MCF 10A (cell line): ENCODE measurements at regions of chr6 and their contacts with region 1.

Region 1: GRCh38 chr6:72748759-72749158 is 126.9 kb downstream of the KCNQ5 start:
- DNase-seq: peak; percentile 92
- H3K4me3 Mint-ChIP-seq: no peak overlapping the region
- H3K27ac Mint-ChIP-seq: no peak overlapping the region
- H3K4me1 Mint-ChIP-seq: peaks cover 32% of the 10 kb centered on the region
- H3K27me3 Mint-ChIP-seq: no peaks in the 10 kb centered on the region
- CTCF ChIP-seq: no peak

Region 2: GRCh38 chr6:72649032-72649984 is 99.5 kb before region 1 on chr6:
- CTCF ChIA-PET with region 1: no interaction called
- POLR2A ChIA-PET with region 1: interaction called, 3 read pairs
- intact Hi-C with region 1: loop called (anchors 2 kb)
- DNase-seq: peak; percentile 90
- H3K4me3 Mint-ChIP-seq: no peak overlapping the region
- H3K27ac Mint-ChIP-seq: peak overlapping the region; percentile 1
- H3K4me1 Mint-ChIP-seq: peaks cover 46% of the 10 kb centered on the region
- H3K27me3 Mint-ChIP-seq: no peaks in the 10 kb centered on the region
- CTCF ChIP-seq: no peak

Region 3: DNA sequence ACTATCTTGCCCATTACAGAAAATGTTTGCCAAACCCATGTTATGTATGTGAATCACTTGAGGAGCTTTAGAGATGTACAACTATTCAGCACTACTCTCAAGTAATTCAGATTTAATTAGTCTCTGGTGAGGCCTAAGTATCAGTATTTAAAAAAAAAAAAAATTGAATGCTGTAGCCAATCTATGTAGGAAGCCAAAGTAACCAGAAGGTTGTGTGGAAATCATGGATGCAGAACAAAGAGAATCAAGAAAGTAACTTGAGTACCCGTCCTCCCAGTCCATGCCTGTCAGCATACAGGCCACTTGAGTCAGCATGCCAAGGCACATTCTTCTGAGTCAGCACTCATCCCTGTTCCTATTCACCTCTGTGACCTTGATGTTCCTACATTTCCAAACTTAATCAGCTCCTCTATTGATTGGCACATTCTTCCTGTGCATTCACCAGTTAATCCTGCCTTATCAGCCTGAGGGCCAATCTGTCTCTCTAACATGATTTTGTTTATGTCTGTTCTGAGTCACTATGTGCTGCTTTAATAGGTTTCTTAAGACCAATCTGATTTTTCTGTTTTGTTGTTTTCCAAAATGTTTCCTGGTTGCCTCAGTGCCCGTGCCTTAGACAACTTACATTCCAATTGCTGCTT is 38.8 kb after region 1 on chr6:
- CTCF ChIA-PET with region 1: interaction called, 5 read pairs
- POLR2A ChIA-PET with region 1: interaction called, 5 read pairs
- intact Hi-C with region 1: loop called (anchors 5 kb)
- DNase-seq: peak; percentile 92
- H3K4me3 Mint-ChIP-seq: no peak overlapping the region
- H3K27ac Mint-ChIP-seq: peak overlapping the region; percentile 74
- H3K4me1 Mint-ChIP-seq: peaks cover 33% of the 10 kb centered on the region
- H3K27me3 Mint-ChIP-seq: no peaks in the 10 kb centered on the region
- CTCF ChIP-seq: no peak